ENCODE measurements at regions of chr22 and their contacts with region 1.

Region 1: GRCh38 chr22:28594797-28595462 is 84.7 kb downstream of the TTC28 start:
- DNase-seq: no peak
- ATAC-seq: peak; percentile 79
- H3K4me3 ChIP-seq: no peak overlapping the region
- H3K4me1 ChIP-seq: no peaks in the 10 kb centered on the region
- CTCF ChIP-seq: peak; percentile 26

Region 2: GRCh38 chr22:28019881-28020871 is 574.8 kb before region 1 on chr22:
- intact Hi-C with region 1: loop called (anchors 5 to 10 kb)
- DNase-seq: peak in 2 of 3 donors; percentile 74 to 78
- ATAC-seq: peak; percentile 81
- H3K4me3 ChIP-seq: no peak overlapping the region
- H3K4me1 ChIP-seq: no peaks in the 10 kb centered on the region
- CTCF ChIP-seq: peak; percentile 95

Region 3: GRCh38 chr22:28051787-28052356 is 543.1 kb before region 1 on chr22:
- intact Hi-C with region 1: loop called (anchors 2 to 10 kb)
- DNase-seq: peak in 2 of 3 donors; percentile 75 to 76
- ATAC-seq: peak; percentile 53
- H3K4me3 ChIP-seq: no peak overlapping the region
- H3K4me1 ChIP-seq: no peaks in the 10 kb centered on the region
- CTCF ChIP-seq: peak; percentile 76

Region 4: GRCh38 chr22:28297504-28297903 is 297.4 kb before region 1 on chr22:
- intact Hi-C with region 1: no loop called
- DNase-seq: peak in 1 of 3 donors; percentile 35
- ATAC-seq: peak; percentile 33
- H3K4me3 ChIP-seq: no peak overlapping the region
- H3K4me1 ChIP-seq: no peaks in the 10 kb centered on the region
- CTCF ChIP-seq: no peak

Region 5: GRCh38 chr22:28373831-28374230 is 221.1 kb before region 1 on chr22:
- intact Hi-C with region 1: no loop called
- DNase-seq: no peak
- ATAC-seq: no peak
- H3K4me3 ChIP-seq: no peak overlapping the region
- H3K4me1 ChIP-seq: no peaks in the 10 kb centered on the region
- CTCF ChIP-seq: no peak

Measured in mucosa of descending colon (tissue), 3 donors.